ENCODE measurements at regions of chr7 and their contacts with region 1.

Region 1: DNA sequence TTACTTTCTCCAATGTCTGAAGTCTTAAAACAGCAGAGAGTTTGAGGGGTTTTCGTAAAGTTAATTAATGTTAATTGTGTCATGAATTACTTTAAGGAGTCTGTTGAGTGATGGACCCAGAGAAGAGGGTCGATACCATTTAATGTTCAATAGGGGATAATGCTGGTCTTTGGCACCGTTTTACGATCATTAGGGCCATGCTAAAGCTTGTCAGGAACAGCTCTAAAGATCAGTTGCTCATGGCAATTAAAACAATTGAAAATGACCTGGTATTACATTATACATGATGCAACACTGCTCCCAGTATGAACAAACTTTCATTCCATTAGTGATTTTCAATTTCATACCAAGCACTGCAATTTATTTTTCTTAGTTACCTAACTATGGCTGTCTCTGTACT is 296.9 kb downstream of the ETV1 start:
- DNase-seq: no peak
- H3K4me3 ChIP-seq: no peak overlapping the region
- H3K27ac ChIP-seq: no peak overlapping the region
- H3K4me1 ChIP-seq: no peaks in the 10 kb centered on the region
- H3K27me3 ChIP-seq: no peaks in the 10 kb centered on the region
- CTCF ChIP-seq: no peak

Region 2: GRCh38 chr7:13639396-13639795 is 53.2 kb before region 1 on chr7:
- intact Hi-C with region 1: loop called (anchors 10 kb)
- DNase-seq: no peak
- H3K4me3 ChIP-seq: no peak overlapping the region
- H3K27ac ChIP-seq: no peak overlapping the region
- H3K4me1 ChIP-seq: no peaks in the 10 kb centered on the region
- H3K27me3 ChIP-seq: no peaks in the 10 kb centered on the region
- CTCF ChIP-seq: no peak